IMR-90 (cell line): ENCODE measurements at regions of chr13 and their contacts with region 1.

Region 1: GRCh38 chr13:74203576-74203975 is 69.4 kb upstream of the KLF12 start:
- DNase-seq: peak; percentile 47
- ATAC-seq: no peak; the same call in 1 of the 2 replicates
- H3K4me3 ChIP-seq: no peak overlapping the region
- H3K27ac ChIP-seq: no peak overlapping the region
- H3K4me1 ChIP-seq: peaks cover 24% of the 10 kb centered on the region
- H3K27me3 ChIP-seq: no peaks in the 10 kb centered on the region
- CTCF ChIP-seq: no peak
- POLR2A ChIP-seq: no peak
- RAD21 ChIP-seq: no peak

Region 2: GRCh38 chr13:74110053-74110452 is 93.5 kb before region 1 on chr13:
- CTCF ChIA-PET with region 1: no interaction called
- POLR2A ChIA-PET with region 1: no interaction called
- dilution Hi-C with region 1: no loop called
- in situ Hi-C with region 1: no loop called
- intact Hi-C with region 1: no loop called
- DNase-seq: no peak
- ATAC-seq: no peak
- H3K4me3 ChIP-seq: no peak overlapping the region
- H3K27ac ChIP-seq: no peak overlapping the region
- H3K4me1 ChIP-seq: peaks cover 6% of the 10 kb centered on the region; the same call in 1 of the 2 replicates
- H3K27me3 ChIP-seq: no peaks in the 10 kb centered on the region
- CTCF ChIP-seq: no peak
- POLR2A ChIP-seq: no peak
- RAD21 ChIP-seq: no peak

Region 3: DNA sequence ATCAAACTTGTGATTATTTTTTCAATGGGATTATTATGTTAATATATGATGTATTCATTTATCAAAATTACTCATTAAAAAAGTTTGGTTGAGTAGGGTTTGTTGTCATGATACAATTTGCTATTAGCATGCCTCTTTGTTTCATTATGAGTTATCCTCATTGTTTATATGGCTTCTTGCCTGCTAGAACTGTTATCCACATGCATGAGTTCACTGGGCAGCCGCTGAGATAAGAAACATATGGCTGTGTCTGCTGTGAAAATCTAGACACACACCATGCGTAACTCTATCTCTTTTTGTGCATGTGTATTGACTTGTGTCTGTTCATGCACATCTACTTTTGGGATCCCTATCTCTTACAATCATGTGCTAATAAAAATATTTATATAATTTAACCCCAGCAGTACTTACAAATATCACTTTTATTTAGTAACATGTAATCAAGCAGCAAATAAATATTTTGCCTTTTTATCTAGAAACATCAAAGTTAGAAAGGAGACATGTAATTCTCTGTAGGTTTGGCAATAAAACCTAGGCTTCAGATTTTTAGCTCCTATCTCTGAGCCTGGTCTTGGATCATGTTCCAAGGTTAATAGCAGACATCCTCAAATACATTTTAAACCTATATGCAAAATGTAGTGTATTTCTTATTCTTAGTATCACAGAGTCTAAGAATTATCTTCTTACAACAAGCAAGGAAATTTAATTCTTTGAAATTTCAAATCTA is 58.2 kb before region 1 on chr13:
- CTCF ChIA-PET with region 1: no interaction called
- POLR2A ChIA-PET with region 1: no interaction called
- dilution Hi-C with region 1: no loop called
- in situ Hi-C with region 1: no loop called
- intact Hi-C with region 1: loop called (anchors 5 kb)
- DNase-seq: peak; percentile 91
- ATAC-seq: peak; percentile 92
- H3K4me3 ChIP-seq: no peak overlapping the region; the same call in 1 of the 2 replicates
- H3K27ac ChIP-seq: no peak overlapping the region
- H3K4me1 ChIP-seq: no peaks in the 10 kb centered on the region; the same call in 1 of the 2 replicates
- H3K27me3 ChIP-seq: no peaks in the 10 kb centered on the region
- CTCF ChIP-seq: no peak
- POLR2A ChIP-seq: no peak
- RAD21 ChIP-seq: no peak